Esophagus muscularis mucosa (tissue), 4 donors: ENCODE measurements at regions of chr10 and their contacts with region 1.

Region 1: DNA sequence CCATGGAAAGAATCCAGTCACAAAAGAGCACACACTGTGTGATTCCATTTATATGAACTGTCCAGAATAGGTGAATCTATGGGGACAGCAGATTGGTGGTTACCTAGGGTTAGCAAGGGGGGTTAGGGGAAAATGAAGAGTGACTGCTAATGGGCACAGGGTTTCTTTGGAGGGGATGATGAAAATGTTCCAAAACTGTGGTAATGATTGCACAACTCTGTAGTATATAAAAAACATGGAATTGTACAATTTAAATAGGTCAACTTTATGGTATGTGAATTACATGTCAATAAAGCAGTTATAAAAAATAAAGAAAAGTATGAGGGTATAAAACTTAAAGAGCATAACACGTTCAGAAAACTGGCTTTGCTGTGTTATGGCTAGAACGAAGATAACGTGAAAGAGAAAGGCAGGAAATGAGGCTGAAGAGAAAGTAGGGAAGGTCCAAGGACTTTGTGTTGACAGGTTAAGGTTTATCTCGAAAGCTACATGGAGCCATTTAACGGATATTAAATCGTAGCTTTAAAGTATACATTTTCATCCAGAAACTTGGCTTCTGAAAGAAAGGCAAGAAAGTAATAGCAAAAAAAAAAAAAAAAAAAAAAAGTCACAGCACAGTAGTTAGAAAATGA is 26.4 kb upstream of the MSS51 start:
- DNase-seq: no peak
- H3K4me3 ChIP-seq: no peak overlapping the region
- H3K27ac ChIP-seq: no peak overlapping the region
- H3K4me1 ChIP-seq: no peaks in the 10 kb centered on the region
- H3K27me3 ChIP-seq: no peaks in the 10 kb centered on the region
- CTCF ChIP-seq: no peak
- EP300 ChIP-seq: no peak
- POLR2A ChIP-seq: no peak

Region 2: DNA sequence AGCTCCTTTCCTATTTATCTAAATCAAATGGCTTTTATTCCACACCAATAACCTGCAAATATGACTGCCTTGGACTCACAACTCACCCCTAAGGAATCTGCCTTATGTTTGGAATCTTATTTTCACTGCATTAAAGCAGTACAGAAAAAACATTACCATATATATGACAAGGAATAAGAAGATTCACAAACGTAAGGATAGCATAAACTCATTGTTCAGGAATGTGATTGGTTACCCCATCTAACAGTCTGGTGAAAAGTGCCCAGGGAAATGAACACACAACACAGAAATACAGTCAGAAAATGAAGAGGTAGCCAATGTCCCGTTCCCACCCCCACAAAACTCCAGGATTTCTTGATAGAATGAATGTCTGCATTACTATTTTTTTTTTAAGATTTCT is 34.0 kb after region 1 on chr10:
- intact Hi-C with region 1: loop called (anchors 5 kb)
- DNase-seq: no peak
- H3K4me3 ChIP-seq: peak overlapping the region in 3 of 4 donors; percentile 81 to 92 (median 89)
- H3K27ac ChIP-seq: peak overlapping the region in 1 of 4 donors; percentile 96
- H3K4me1 ChIP-seq: peaks cover 26 to 72% (median 64%) of the 10 kb centered on the region in 4 donors
- H3K27me3 ChIP-seq: no peaks in the 10 kb centered on the region
- CTCF ChIP-seq: no peak
- EP300 ChIP-seq: no peak
- POLR2A ChIP-seq: no peak